CD4-positive, alpha-beta memory T cell (primary cell): ENCODE measurements at regions of chrX and their contacts with region 1.

Region 1: DNA sequence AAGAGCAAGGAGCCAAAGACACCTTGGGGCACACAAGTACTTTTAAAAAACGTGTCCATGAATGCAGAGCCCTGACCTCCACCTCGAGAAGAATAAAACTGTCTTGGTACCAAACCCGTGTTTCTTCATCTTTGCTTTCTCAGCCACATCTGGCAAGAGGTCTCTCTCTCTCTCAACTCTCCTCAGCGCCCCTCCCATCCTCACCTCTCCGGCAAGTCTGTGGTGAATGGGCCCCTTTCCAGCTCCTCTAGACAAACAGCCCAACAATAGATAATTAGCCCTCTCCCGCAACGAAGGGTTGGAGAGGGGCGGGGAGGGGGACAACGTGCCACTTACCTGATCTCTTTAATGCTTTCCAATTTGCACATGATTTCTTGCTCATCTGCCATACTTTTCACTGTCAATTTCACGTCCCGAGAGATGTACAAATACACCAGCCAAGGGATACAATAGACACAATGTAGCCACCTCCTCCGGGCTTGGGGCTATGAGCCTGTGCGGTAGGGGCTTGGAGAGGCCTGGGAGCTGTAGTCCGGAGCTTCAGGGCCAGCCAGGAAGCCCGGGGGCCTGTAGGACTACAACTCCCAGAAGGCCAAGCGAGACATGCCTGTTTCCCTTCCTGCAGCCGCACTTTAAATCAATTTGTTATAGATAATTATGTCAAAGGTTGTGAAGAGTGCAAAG is at the start of gene ZC4H2:
- DNase-seq: peak; percentile 65 to 77 (median 68)
- H3K4me3 ChIP-seq: peak within 1 kb of the TSS; percentile 61 to 73
- H3K4me3 Mint-ChIP-seq: peak within 1 kb of the TSS; percentile 89 to 98 (median 96)
- H3K27ac ChIP-seq: peak within 1 kb of the TSS; percentile 24
- H3K27ac Mint-ChIP-seq: peak within 1 kb of the TSS; percentile 65 to 91 (median 87)
- H3K4me1 ChIP-seq: peaks cover 15% of the 10 kb centered on the region
- H3K4me1 Mint-ChIP-seq: peaks cover 4 to 33% (median 16%) of the 10 kb centered on the region in 4 donors
- H3K27me3 ChIP-seq: no peaks in the 10 kb centered on the region
- H3K27me3 Mint-ChIP-seq: no peaks in the 10 kb centered on the region
- total RNA-seq, gene ZC4H2: 8.2 to 11.8 TPM

Region 2: DNA sequence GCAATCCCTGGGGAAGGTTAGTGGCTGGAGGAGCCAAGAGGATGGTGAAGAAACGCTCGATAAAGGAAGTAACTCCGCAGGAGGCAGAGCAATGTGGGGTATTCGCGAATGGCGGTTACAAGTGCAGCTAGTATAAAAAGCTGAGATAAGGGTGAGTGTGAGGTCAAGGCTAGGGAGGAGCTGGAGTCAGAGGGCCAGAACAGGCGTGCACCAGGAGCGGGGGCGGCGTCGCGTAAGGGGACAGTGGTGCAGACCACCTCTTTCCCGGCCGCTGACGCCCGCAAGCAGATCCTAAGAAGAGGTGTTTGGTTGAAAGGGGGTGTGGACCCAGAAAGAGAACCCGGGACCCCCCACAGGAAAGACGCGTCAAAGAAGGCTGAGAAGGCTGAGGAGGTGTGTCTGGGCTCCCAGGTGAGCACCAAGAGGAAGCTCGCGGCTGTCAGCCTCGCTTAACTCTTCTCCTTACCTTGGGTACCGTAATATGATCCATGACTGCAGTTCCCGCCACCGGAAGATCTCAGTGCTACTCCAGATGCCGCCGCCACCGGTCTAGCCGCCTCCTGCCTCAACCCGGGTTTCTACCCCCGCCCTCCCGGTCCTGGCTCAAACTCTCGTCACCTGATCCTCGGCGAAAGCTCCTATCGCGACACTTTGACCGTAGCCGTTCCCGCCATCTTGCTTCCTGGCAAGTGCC is 581.1 kb before region 1 on chrX and contains the start of gene MTMR8:
- CTCF ChIA-PET with region 1: no interaction called
- POLR2A ChIA-PET with region 1: no interaction called
- intact Hi-C with region 1: loop called (anchors 10 kb)
- DNase-seq: peak; percentile 77 to 83 (median 80)
- H3K4me3 ChIP-seq: peak within 1 kb of the TSS; percentile 52 to 79
- H3K4me3 Mint-ChIP-seq: peak within 1 kb of the TSS; percentile 90 to 97 (median 94)
- H3K27ac ChIP-seq: peak within 1 kb of the TSS; percentile 54
- H3K27ac Mint-ChIP-seq: peak within 1 kb of the TSS; percentile 86 to 93 (median 91)
- H3K4me1 ChIP-seq: peaks cover 15% of the 10 kb centered on the region
- H3K4me1 Mint-ChIP-seq: peaks cover 12 to 56% (median 32%) of the 10 kb centered on the region in 4 donors
- H3K27me3 ChIP-seq: no peaks in the 10 kb centered on the region
- H3K27me3 Mint-ChIP-seq: no peaks in the 10 kb centered on the region
- total RNA-seq, gene MTMR8: 7.6 to 8.3 TPM

Region 3: GRCh38 chrX:65534450-65535292 is 558.5 kb after region 1 on chrX and contains the start of gene LAS1L:
- CTCF ChIA-PET with region 1: no interaction called
- POLR2A ChIA-PET with region 1: interaction called, 5 read pairs
- intact Hi-C with region 1: loop called (anchors 10 kb)
- DNase-seq: peak; percentile 90 to 94 (median 91)
- H3K4me3 ChIP-seq: peak within 1 kb of the TSS; percentile 66 to 75
- H3K4me3 Mint-ChIP-seq: peak within 1 kb of the TSS; percentile 97 to 100 (median 100)
- H3K27ac ChIP-seq: peak within 1 kb of the TSS; percentile 73
- H3K27ac Mint-ChIP-seq: peak within 1 kb of the TSS; percentile 97 to 100 (median 99)
- H3K4me1 ChIP-seq: peaks cover 18% of the 10 kb centered on the region
- H3K4me1 Mint-ChIP-seq: peaks cover 7 to 24% (median 16%) of the 10 kb centered on the region in 4 donors
- H3K27me3 ChIP-seq: no peaks in the 10 kb centered on the region
- H3K27me3 Mint-ChIP-seq: no peaks in the 10 kb centered on the region
- total RNA-seq, gene LAS1L: 38.5 to 41.6 TPM